Mammary epithelial cell (primary cell): ENCODE measurements at regions of chr1 and their contacts with region 1.

Region 1: GRCh38 chr1:15116966-15117365 is 36.6 kb upstream of the TMEM51 start:
- DNase-seq: no peak
- H3K4me3 ChIP-seq: no peak overlapping the region
- H3K27ac ChIP-seq: no peak overlapping the region
- H3K4me1 ChIP-seq: no peaks in the 10 kb centered on the region
- H3K27me3 ChIP-seq: no peaks in the 10 kb centered on the region
- CTCF ChIP-seq: no peak

Region 2: GRCh38 chr1:14899581-14900085 is 217.3 kb before region 1 on chr1:
- CTCF ChIA-PET with region 1: no interaction called
- dilution Hi-C with region 1: no loop called
- in situ Hi-C with region 1: no loop called
- intact Hi-C with region 1: no loop called
- DNase-seq: no peak
- H3K4me3 ChIP-seq: no peak overlapping the region
- H3K27ac ChIP-seq: no peak overlapping the region
- H3K4me1 ChIP-seq: peaks cover 31% of the 10 kb centered on the region
- H3K27me3 ChIP-seq: no peaks in the 10 kb centered on the region
- CTCF ChIP-seq: no peak

Region 3: GRCh38 chr1:14987829-14988603 is 128.9 kb before region 1 on chr1:
- CTCF ChIA-PET with region 1: no interaction called
- dilution Hi-C with region 1: no loop called
- in situ Hi-C with region 1: no loop called
- intact Hi-C with region 1: no loop called
- DNase-seq: no peak
- H3K4me3 ChIP-seq: no peak overlapping the region
- H3K27ac ChIP-seq: no peak overlapping the region
- H3K4me1 ChIP-seq: no peaks in the 10 kb centered on the region
- H3K27me3 ChIP-seq: no peaks in the 10 kb centered on the region
- CTCF ChIP-seq: no peak

Region 4: DNA sequence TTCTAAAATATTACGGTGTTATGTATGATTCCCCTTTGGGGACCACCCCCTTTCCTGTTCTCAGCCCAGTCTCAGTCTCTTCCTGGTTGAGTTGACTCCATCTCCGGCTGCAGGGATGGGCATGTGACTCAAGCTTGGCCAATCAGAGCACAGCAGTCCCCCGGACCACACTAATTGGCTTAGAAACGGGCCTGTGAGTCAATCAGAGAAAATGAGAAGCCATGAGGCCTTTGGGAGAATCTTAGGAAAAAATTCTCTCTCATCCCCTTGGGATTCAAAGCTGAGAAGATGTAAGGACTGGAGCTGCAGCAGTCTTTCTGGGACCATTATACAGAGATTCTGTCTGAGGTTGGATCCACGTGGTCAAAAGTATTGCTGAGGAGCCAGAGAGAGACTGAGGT is 119.4 kb after region 1 on chr1:
- CTCF ChIA-PET with region 1: no interaction called
- dilution Hi-C with region 1: loop called (anchors 5 kb)
- in situ Hi-C with region 1: no loop called
- intact Hi-C with region 1: no loop called
- DNase-seq: no peak
- H3K4me3 ChIP-seq: no peak overlapping the region
- H3K27ac ChIP-seq: no peak overlapping the region
- H3K4me1 ChIP-seq: no peaks in the 10 kb centered on the region
- H3K27me3 ChIP-seq: no peaks in the 10 kb centered on the region
- CTCF ChIP-seq: no peak